ENCODE measurements at regions of chr18 and their contacts with region 1.

Region 1: DNA sequence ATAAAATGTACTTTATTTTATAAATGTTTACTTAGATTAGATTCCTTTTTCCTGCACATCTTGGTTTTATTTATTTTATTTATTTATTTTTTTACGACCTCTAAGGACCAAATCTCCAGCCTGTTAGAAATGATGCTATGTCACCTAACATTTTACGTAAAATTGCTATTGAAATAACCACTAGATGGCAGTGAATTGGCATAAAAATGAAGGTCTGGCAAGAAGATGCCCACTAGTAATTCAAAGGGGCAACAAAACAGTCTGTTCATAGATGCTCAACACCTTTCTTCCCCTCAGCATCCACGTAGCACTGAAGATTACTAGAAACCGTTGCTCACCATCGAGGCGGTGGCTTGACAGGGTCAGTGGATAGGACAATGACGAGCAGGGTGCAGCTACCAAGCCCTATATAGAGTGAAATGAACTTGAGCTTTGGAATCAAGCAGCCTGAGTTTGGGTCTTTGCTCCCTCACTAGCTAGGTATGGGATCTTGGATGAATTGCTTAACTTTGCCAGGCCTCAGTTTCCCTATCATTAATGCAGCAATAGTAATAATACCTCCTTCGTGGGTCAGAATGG is 128.7 kb upstream of the L3MBTL4 start:
- DNase-seq: peak; percentile 27
- H3K4me3 ChIP-seq: no peak overlapping the region
- H3K27ac ChIP-seq: no peak overlapping the region
- H3K4me1 ChIP-seq: no peaks in the 10 kb centered on the region
- H3K27me3 ChIP-seq: no peaks in the 10 kb centered on the region
- CTCF ChIP-seq: peak; percentile 42 to 60

Region 2: DNA sequence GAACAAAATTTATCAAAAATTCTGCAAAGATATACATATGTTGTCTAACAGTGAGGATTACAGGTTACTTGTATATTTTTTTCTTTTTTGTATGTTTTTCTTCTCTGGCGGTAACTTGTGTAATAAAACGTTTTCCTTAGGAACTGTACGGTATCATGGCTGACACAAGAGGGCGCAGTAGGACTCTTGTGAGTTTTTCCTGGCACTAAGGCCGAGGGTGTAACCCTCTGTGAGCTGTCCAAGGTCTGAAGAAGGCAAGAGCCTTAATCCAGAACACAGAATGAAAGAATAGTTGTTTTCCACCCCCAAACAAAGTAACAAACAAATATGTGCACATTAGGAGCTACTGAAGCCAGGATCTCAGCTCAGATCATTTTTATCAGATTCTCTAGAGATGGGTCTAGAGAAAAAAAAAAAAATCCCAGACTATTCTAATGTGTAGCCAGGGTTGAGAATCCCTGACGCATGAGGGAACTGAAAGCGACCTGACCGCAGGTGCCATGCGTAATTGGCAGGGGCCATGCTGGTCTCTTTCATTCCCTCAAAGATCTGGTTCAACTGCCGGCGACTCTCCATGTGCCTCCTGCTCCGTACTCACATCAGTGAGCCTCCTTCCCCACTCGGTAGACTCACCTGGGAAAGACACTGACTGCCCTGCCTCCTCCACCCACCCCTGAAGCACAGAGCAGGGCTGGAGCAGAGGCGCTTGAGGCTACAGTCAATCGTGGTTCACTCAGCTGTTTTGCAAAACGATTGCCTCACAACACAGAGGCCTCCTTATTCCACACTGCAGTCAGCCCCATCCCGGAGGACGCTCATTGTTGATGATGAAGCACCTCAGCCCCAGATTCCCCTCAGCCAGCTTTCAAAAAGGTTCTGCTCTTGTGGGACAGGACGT is 675.0 kb before region 1 on chr18:
- CTCF ChIA-PET with region 1: no interaction called
- dilution Hi-C with region 1: no loop called
- in situ Hi-C with region 1: no loop called
- intact Hi-C with region 1: loop called (anchors 1 kb)
- DNase-seq: peak; percentile 66
- H3K4me3 ChIP-seq: no peak overlapping the region
- H3K27ac ChIP-seq: no peak overlapping the region
- H3K4me1 ChIP-seq: no peaks in the 10 kb centered on the region
- H3K27me3 ChIP-seq: no peaks in the 10 kb centered on the region
- CTCF ChIP-seq: peak; percentile 58 to 61

Region 3: GRCh38 chr18:6414118-6414722 is 129.2 kb before region 1 on chr18:
- CTCF ChIA-PET with region 1: no interaction called
- dilution Hi-C with region 1: no loop called
- in situ Hi-C with region 1: no loop called
- intact Hi-C with region 1: no loop called
- DNase-seq: peak; percentile 7
- H3K4me3 ChIP-seq: peak overlapping the region in 2 of 3 experiments; percentile 25 to 47
- H3K27ac ChIP-seq: no peak overlapping the region
- H3K4me1 ChIP-seq: no peaks in the 10 kb centered on the region
- H3K27me3 ChIP-seq: peaks cover 14% of the 10 kb centered on the region
- CTCF ChIP-seq: no peak

Region 4: DNA sequence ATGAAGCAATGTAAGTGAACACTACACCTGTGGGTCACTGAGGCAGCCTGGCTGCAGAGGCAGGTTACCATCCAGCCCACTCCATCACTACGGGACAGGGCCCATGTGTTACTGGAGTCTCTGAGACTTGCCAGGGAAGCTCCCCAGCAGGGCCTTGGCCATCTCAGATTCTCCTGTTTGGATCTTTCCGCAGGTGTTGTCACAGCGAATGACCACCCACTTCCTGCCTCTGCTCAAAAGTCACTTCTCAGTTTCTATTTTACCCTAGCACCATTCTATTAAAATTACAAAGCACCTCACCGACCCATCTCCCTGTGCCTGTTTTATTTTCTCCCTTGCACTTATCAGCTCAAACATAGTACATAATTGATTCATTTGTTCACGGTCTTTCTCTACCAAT is 94.2 kb before region 1 on chr18:
- CTCF ChIA-PET with region 1: no interaction called
- dilution Hi-C with region 1: no loop called
- in situ Hi-C with region 1: no loop called
- intact Hi-C with region 1: no loop called
- DNase-seq: no peak
- H3K4me3 ChIP-seq: no peak overlapping the region
- H3K27ac ChIP-seq: no peak overlapping the region
- H3K4me1 ChIP-seq: no peaks in the 10 kb centered on the region
- H3K27me3 ChIP-seq: no peaks in the 10 kb centered on the region
- CTCF ChIP-seq: no peak

Region 5: GRCh38 chr18:6729247-6730091 is 186.1 kb after region 1 on chr18 and contains the start of gene ARHGAP28:
- CTCF ChIA-PET with region 1: no interaction called
- dilution Hi-C with region 1: no loop called
- in situ Hi-C with region 1: no loop called
- intact Hi-C with region 1: loop called (anchors 2 kb)
- DNase-seq: peak; percentile 89
- H3K4me3 ChIP-seq: peak within 1 kb of the TSS; percentile 52 to 62 (median 55)
- H3K27ac ChIP-seq: no peak within 1 kb of the TSS
- H3K4me1 ChIP-seq: peaks cover 16% of the 10 kb centered on the region
- H3K27me3 ChIP-seq: no peaks in the 10 kb centered on the region
- CTCF ChIP-seq: peak in 1 of 2 donors; percentile 34
- total RNA-seq, gene ARHGAP28: 0.38 to 9.0 TPM

Region 6: GRCh38 chr18:6747646-6748045 is 204.2 kb after region 1 on chr18:
- CTCF ChIA-PET with region 1: no interaction called
- dilution Hi-C with region 1: no loop called
- in situ Hi-C with region 1: no loop called
- intact Hi-C with region 1: loop called (anchors 5 kb)
- DNase-seq: peak; percentile 95
- H3K4me3 ChIP-seq: no peak overlapping the region
- H3K27ac ChIP-seq: no peak overlapping the region
- H3K4me1 ChIP-seq: peaks cover 22% of the 10 kb centered on the region
- H3K27me3 ChIP-seq: no peaks in the 10 kb centered on the region
- CTCF ChIP-seq: no peak

Region 7: DNA sequence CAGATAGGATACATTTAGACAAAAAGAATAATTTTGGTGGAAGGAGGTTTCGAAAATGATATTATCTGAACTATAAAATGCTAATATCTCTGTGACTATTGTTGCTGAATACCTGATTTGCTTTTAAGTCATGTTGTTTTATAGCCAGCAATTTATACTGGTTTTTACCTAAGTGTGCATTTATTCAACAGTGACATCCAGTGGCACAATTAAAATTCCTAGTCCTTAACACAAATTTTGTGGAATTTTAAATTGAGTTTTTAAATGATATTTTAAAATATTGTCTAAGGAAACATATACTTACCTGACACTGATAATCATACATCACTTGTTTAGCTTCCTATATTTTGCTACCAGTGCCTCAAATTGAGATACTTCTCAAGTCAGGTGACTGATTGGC is 330.9 kb after region 1 on chr18:
- CTCF ChIA-PET with region 1: no interaction called
- dilution Hi-C with region 1: no loop called
- in situ Hi-C with region 1: no loop called
- intact Hi-C with region 1: loop called (anchors 1 kb)
- DNase-seq: no peak
- H3K4me3 ChIP-seq: no peak overlapping the region
- H3K27ac ChIP-seq: no peak overlapping the region
- H3K4me1 ChIP-seq: no peaks in the 10 kb centered on the region
- H3K27me3 ChIP-seq: no peaks in the 10 kb centered on the region
- CTCF ChIP-seq: peak in 1 of 2 donors; percentile 27

Region 8: DNA sequence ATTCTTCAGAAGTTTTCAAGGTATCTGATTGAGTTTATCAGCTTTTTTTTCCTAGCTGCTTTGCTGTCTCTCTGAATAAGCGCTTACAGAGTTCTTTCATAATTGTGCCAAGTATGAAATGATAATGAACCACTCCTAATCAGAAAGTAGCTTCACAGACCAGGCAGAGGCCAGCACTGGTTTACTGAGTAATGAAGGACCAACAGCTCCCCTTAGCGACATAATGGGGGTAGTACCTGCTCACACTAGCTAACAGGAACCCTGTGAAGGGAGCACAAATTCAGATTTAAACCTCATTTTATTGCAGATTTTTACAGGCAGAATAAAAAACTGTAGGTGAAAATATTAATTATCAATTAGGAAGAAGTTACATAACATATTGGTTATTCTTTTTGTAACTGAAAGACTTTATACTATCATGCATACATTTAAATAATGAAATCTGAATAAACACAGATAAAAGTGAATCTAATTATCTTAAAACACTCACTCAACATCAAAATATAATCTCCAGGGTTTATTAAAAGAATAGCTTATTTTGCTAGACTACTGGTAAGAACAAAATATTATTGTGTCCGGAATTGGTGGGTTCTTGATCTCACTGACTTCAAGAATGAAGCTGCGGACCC is 633.8 kb after region 1 on chr18:
- CTCF ChIA-PET with region 1: no interaction called
- dilution Hi-C with region 1: no loop called
- in situ Hi-C with region 1: loop called in 1 of 2 experiments (anchors 25 kb)
- intact Hi-C with region 1: loop called (anchors 2 kb)
- DNase-seq: peak; percentile 72
- H3K4me3 ChIP-seq: no peak overlapping the region
- H3K27ac ChIP-seq: no peak overlapping the region
- H3K4me1 ChIP-seq: no peaks in the 10 kb centered on the region
- H3K27me3 ChIP-seq: no peaks in the 10 kb centered on the region
- CTCF ChIP-seq: peak; percentile 87 to 91